Natural killer cell (primary cell): ENCODE measurements at regions of chr1 and their contacts with region 1.

Region 1: DNA sequence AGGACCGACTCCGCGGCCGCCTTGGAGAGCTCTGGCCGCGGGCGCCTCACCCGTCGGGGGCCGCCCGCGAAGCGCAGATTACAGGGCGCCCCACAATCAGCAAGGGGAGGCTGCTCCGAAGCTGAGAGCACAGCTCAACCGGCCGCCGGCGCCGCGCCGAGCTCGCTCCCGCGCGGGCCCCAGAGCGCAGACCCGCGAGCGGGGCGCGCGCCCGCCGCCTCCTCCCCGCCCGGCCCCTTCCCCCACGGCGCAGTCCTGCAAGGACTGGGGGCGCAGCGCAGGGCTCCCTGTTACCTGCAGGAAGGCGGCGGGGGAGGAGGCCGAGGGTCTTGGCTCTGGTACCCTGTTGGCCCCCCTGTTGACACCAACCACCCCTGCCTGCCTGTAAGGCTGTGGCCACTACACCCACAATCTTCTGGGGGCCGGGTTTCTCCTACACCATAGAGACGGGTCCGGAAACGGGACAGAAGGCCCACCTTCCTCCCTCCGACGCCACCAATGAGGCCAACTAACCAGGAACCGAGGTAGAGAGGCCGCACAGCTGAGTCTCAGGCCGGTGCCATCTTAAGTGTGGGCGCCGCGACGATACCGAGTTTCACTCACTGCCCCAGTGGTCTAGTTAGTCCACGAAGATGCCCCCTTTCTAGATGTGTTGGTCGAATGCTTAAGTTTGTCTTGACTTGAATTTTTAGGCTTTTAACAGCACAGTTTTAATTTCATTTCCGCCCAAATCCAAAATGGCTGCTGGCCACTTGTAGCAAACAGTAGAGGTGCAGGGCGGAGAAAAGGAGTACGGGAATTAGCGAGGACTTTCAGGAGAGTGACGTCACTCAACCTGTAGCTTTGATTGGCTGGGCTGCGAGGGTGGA is at the start of gene SCYL3:
- DNase-seq: peak; percentile 84 to 96
- ATAC-seq: peak; percentile 84 to 95 (median 87)
- H3K4me3 ChIP-seq: peak within 1 kb of the TSS; percentile 94
- H3K4me3 Mint-ChIP-seq: peak within 1 kb of the TSS; percentile 94
- H3K27ac ChIP-seq: peak within 1 kb of the TSS; percentile 91
- H3K27ac Mint-ChIP-seq: peak within 1 kb of the TSS; percentile 100
- H3K4me1 ChIP-seq: peaks cover 20% of the 10 kb centered on the region
- H3K4me1 Mint-ChIP-seq: peaks cover 46 to 49% of the 10 kb centered on the region in 2 donors
- H3K27me3 ChIP-seq: no peaks in the 10 kb centered on the region
- H3K27me3 Mint-ChIP-seq: peaks cover 8 to 12% of the 10 kb centered on the region in 2 donors
- CTCF ChIP-seq: no peak
- total RNA-seq, gene SCYL3: 6.0 to 12.3 (median 7.0) TPM

Region 2: DNA sequence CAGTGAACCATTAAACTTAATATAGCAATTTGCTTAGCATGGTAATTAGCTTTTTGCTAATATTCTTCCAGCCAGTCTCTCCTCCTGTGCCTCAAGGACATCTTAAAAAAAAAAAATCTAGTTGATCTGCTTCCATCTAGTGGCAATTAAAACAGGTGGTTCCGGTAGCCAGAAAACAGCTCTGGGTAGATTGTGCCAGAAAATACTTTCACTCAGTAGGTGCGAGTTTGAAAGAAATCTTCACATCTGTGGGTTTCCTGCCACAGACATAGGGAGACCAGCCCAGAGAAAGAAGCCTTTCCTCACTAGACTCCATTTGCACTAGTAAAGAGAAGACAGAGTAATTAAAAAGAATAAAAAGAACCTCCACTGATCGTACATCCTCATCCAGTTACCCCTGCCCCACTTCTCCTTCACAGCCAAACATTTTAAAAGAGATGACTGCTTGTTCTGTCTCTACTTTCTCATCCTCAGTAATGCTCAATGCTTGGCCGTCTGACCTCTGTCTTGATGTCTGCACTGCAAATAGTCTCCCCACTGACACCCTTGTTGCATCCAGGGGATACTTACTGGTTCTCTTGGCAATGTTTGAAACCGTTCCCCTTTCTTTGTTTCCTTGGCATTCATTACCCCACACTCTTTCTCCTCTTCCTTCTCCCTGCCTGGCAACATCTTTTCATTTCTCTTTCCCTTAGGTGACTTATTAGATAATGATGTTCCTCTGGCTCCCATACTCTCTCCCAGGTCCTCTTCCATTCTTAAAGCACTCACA is 199.2 kb before region 1 on chr1:
- intact Hi-C with region 1: loop called (anchors 5 kb)
- DNase-seq: peak; percentile 28 to 83
- ATAC-seq: peak; percentile 60 to 80 (median 77)
- H3K4me3 ChIP-seq: no peak overlapping the region
- H3K4me3 Mint-ChIP-seq: peak overlapping the region; percentile 59
- H3K27ac ChIP-seq: peak overlapping the region; percentile 74
- H3K27ac Mint-ChIP-seq: peak overlapping the region; percentile 80 to 89
- H3K4me1 ChIP-seq: peaks cover 60% of the 10 kb centered on the region
- H3K4me1 Mint-ChIP-seq: peaks cover 82 to 88% of the 10 kb centered on the region in 2 donors
- H3K27me3 ChIP-seq: no peaks in the 10 kb centered on the region
- H3K27me3 Mint-ChIP-seq: no peaks in the 10 kb centered on the region
- CTCF ChIP-seq: peak; percentile 20

Region 3: GRCh38 chr1:169933984-169934725 is 40.4 kb after region 1 on chr1:
- intact Hi-C with region 1: no loop called
- DNase-seq: no peak
- ATAC-seq: no peak
- H3K4me3 ChIP-seq: no peak overlapping the region
- H3K4me3 Mint-ChIP-seq: no peak overlapping the region
- H3K27ac ChIP-seq: no peak overlapping the region
- H3K27ac Mint-ChIP-seq: no peak overlapping the region
- H3K4me1 ChIP-seq: no peaks in the 10 kb centered on the region
- H3K4me1 Mint-ChIP-seq: no peaks in the 10 kb centered on the region
- H3K27me3 ChIP-seq: no peaks in the 10 kb centered on the region
- H3K27me3 Mint-ChIP-seq: no peaks in the 10 kb centered on the region
- CTCF ChIP-seq: no peak

Region 4: DNA sequence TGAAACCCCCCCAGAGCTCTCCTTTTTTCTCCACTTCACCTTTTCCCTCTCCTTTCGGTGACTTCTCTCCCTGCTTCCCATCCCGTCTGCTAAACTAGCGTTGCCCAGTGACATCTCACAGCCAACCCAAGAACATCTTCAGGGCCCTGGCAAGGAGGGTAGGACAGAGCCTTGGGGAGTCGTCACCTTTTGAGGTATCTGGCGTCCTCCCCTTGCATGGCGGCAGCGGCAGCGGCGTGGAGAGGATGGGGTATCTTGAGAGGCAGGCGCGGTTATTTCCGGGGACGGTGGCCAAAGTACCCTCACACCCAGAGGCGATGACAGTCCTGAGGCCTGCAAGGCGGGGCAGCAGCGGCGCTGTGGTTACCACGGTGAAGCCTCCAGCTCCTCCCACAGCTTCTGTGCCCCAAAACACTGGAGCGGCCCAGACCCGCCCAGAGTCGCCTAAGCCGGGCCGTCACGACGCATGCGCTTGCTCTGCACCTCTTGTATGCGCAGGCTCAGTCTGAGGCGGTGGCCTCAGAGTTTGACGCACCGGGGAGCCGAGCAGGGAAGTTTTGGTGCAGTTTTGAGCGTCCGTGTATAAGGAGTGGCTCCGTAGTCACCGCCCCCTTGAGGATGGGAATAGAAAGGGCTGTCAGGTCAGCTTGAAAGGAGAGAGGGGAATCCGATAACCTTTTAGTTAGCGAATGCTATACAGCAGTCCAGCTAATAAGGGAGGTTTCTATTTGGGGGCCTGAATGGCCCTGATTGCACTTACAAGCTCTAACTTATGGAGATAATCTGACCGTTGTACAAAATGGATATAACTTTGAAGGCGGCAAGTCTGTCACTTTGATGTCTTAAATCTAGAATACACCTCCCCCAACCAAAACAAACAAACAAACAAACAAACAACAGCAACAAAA is 180.8 kb after region 1 on chr1 and contains the start of gene KIFAP3:
- intact Hi-C with region 1: loop called (anchors 1 kb)
- DNase-seq: peak; percentile 92 to 99
- ATAC-seq: peak; percentile 92 to 98 (median 94)
- H3K4me3 ChIP-seq: peak within 1 kb of the TSS; percentile 65
- H3K4me3 Mint-ChIP-seq: peak within 1 kb of the TSS; percentile 92
- H3K27ac ChIP-seq: peak within 1 kb of the TSS; percentile 89
- H3K27ac Mint-ChIP-seq: peak within 1 kb of the TSS; percentile 95 to 98
- H3K4me1 ChIP-seq: peaks cover 9% of the 10 kb centered on the region
- H3K4me1 Mint-ChIP-seq: peaks cover 51 to 55% of the 10 kb centered on the region in 2 donors
- H3K27me3 ChIP-seq: no peaks in the 10 kb centered on the region
- H3K27me3 Mint-ChIP-seq: peaks cover 0 to 3% of the 10 kb centered on the region in 2 donors
- CTCF ChIP-seq: no peak
- total RNA-seq, gene KIFAP3: 31.0 to 34.3 (median 33.7) TPM

Region 5: GRCh38 chr1:171485375-171486047 is 1591.8 kb after region 1 on chr1 and contains the start of gene PRRC2C:
- intact Hi-C with region 1: loop called (anchors 5 kb)
- DNase-seq: peak; percentile 89 to 99
- ATAC-seq: peak; percentile 80 to 94 (median 83)
- H3K4me3 ChIP-seq: peak within 1 kb of the TSS; percentile 91
- H3K4me3 Mint-ChIP-seq: peak within 1 kb of the TSS; percentile 97
- H3K27ac ChIP-seq: peak within 1 kb of the TSS; percentile 91
- H3K27ac Mint-ChIP-seq: peak within 1 kb of the TSS; percentile 99 to 100
- H3K4me1 ChIP-seq: peaks cover 10% of the 10 kb centered on the region
- H3K4me1 Mint-ChIP-seq: peaks cover 54 to 56% of the 10 kb centered on the region in 2 donors
- H3K27me3 ChIP-seq: no peaks in the 10 kb centered on the region
- H3K27me3 Mint-ChIP-seq: no peaks in the 10 kb centered on the region
- CTCF ChIP-seq: peak; percentile 80
- total RNA-seq, gene PRRC2C: 330 to 355 (median 353) TPM